ENCODE measurements at regions of chr22 and their contacts with region 1.

Region 1: DNA sequence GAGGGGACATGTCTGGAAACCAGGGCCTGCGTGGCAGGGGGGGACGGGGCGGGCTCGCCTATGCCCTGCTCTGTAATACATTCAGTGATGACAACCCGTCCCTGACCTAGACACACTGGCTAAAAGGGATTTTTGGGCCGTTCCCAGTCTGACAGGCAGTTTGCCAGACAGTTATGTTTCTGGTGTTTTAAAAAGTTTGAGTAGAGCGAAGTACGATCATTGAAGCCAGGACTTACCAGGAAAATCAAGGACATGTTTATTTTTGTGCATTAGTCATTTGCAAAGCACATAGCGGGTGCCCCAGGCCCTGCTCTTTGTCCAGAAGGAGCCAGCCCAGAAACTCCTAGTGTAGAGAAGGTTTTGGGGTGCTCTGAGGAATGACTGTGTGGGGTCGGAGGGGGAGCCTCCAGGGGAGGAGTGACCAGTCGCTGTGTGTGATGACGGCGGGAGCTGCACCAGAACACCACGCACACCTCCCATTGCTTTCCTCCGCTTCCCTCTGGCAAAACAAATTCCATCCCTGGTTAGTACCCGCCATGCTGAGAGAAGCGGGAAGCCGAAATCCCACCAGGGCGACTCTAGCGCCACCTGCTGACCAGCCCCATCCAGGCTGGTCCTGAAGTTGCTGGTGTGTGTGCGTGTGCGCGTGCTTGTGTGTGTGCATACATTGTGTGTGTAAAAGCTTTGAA is 50.8 kb downstream of the FBLN1 start:
- DNase-seq: peak; percentile 63 to 77 (median 76)
- ATAC-seq: peak; percentile 80
- H3K4me3 ChIP-seq: no peak overlapping the region
- H3K4me1 ChIP-seq: peaks cover 5% of the 10 kb centered on the region
- CTCF ChIP-seq: peak; percentile 59

Region 2: GRCh38 chr22:45448431-45448830 is 105.1 kb before region 1 on chr22:
- intact Hi-C with region 1: loop called in 1 of 2 experiments (anchors 5 kb)
- DNase-seq: peak in 2 of 3 donors; percentile 29 to 44
- ATAC-seq: peak; percentile 9
- H3K4me3 ChIP-seq: no peak overlapping the region
- H3K4me1 ChIP-seq: no peaks in the 10 kb centered on the region
- CTCF ChIP-seq: no peak